WTC11 (cell line): ENCODE measurements at regions of chr10 and their contacts with region 1.

Region 1: DNA sequence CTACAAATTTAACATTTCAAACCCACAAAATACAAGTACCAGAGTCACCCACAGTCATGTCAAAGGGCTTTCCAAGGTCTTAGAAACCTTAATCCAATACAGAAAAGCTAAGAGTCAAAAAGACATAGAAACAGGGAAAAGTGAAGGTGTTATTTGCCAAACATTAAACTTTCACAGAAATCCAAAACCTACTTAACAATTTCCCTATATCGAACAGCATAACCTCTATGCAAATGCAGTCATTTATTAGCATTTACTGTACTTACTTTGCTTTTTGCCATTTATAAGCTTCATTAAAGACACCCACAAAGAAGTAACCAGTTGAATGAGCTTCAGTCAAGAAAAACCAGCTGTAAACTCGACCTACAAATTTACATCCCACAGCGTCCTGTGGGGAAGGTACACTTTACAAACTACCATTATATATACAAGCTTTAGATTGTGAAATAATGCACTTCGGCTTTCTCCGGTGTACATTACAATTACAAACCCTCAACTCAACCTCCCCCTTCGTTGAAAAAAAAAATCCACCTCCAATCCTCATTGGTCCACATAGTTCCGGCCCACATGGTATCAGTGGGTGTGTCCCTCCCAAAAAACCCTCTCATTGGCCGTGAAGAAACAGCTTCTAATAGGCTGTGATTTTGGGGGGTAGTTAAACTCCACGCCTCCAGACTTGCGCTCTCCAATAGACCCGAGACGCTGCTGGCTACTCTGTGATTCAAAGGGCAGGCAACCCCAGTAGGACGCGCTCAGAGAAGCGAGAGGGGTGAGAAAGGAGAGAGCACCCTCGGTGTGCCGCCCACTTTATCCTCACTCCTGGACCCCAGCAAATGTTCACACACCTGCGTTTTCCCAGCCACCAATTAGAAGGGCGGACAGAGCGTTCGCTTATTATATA is 1.4 kb downstream of the PANK1 start:
- DNase-seq: peak; percentile 80
- ATAC-seq: peak; percentile 88
- H3K4me3 Mint-ChIP-seq: no peak overlapping the region
- H3K27ac Mint-ChIP-seq: no peak overlapping the region; the same call in 1 of the 2 replicates
- H3K4me1 Mint-ChIP-seq: peaks cover 47% of the 10 kb centered on the region
- H3K27me3 Mint-ChIP-seq: no peaks in the 10 kb centered on the region
- CTCF ChIP-seq: no peak

Region 2: DNA sequence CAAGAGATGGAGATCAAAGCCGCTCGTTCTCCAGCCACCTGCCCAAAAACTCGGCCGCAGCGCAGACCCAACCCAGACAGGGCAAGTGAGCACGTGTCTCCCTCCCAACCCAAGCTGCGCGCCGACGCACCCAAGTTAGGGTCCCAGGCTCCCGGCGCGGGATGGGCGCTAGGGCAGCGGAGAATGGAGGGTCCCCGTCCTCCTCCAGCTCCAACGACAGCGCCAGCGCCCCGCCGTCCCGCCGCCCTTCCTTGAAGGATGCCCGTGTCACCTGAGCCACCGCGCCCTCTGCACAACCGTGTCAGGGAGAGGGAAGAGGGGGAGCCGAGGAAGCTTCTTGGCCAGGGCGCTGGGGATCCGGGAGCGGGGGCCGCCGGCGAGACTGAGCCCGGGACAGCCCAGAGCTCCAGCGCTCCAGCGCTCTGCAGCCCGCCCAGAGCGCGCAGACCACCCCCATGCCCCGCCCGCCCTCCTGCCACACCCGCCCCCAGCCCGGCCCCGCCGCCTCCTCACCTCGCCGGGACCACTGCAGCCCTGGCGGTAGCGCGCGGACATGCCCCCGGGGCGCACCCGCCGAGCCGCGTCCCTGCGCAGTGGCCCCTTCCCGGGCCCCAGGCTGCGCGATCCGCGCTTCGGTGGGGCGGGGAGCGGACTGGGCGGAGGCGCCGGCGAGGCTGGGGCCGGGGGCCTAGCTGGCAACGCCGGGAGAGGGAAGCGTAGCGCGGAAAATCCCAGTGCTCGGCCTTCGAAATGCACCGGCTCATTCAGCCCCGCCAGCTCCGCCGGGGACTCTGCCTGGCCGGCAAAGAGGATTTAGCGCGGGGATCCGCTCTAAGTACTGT is 108.3 kb before region 1 on chr10 and contains the start of gene SLC16A12:
- CTCF ChIA-PET with region 1: no interaction called
- POLR2A ChIA-PET with region 1: interaction called, 10 read pairs
- DNase-seq: peak; percentile 78
- ATAC-seq: peak; percentile 75
- H3K4me3 Mint-ChIP-seq: peak within 1 kb of the TSS; percentile 71
- H3K27ac Mint-ChIP-seq: peak within 1 kb of the TSS; percentile 99
- H3K4me1 Mint-ChIP-seq: peaks cover 52% of the 10 kb centered on the region
- H3K27me3 Mint-ChIP-seq: peaks cover 21% of the 10 kb centered on the region
- CTCF ChIP-seq: no peak
- total RNA-seq, gene SLC16A12: 8.0 to 10.9 TPM (median 8.3 TPM) in 3 replicates

Region 3: GRCh38 chr10:89633484-89633883 is 10.2 kb before region 1 on chr10:
- CTCF ChIA-PET with region 1: interaction called, 3 read pairs
- POLR2A ChIA-PET with region 1: interaction called, 10 read pairs
- DNase-seq: no peak
- ATAC-seq: no peak
- H3K4me3 Mint-ChIP-seq: no peak overlapping the region
- H3K27ac Mint-ChIP-seq: no peak overlapping the region
- H3K4me1 Mint-ChIP-seq: no peaks in the 10 kb centered on the region
- H3K27me3 Mint-ChIP-seq: no peaks in the 10 kb centered on the region
- CTCF ChIP-seq: no peak

Region 4: DNA sequence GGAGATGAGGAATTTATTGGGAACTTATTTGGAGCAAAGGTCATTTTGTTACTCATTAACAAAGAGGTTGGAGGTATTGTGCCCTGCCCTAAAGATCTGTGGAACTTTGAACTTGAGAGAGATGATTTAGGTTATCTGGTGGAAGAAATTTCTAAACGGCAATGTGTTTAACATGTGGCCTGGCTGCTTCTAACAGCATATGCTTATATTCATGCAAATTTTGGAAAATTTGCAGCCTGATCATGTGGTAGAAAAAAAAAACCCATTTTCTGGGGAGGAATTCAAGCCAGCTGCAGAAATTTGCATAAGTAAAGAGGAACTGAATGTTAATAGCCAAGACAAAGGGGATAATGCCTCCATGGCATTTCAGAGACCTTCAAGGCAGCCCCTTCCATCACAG is 12.0 kb after region 1 on chr10:
- CTCF ChIA-PET with region 1: no interaction called
- POLR2A ChIA-PET with region 1: no interaction called
- DNase-seq: no peak
- ATAC-seq: no peak
- H3K4me3 Mint-ChIP-seq: no peak overlapping the region
- H3K27ac Mint-ChIP-seq: no peak overlapping the region
- H3K4me1 Mint-ChIP-seq: peaks cover 14% of the 10 kb centered on the region
- H3K27me3 Mint-ChIP-seq: no peaks in the 10 kb centered on the region
- CTCF ChIP-seq: no peak

Region 5: DNA sequence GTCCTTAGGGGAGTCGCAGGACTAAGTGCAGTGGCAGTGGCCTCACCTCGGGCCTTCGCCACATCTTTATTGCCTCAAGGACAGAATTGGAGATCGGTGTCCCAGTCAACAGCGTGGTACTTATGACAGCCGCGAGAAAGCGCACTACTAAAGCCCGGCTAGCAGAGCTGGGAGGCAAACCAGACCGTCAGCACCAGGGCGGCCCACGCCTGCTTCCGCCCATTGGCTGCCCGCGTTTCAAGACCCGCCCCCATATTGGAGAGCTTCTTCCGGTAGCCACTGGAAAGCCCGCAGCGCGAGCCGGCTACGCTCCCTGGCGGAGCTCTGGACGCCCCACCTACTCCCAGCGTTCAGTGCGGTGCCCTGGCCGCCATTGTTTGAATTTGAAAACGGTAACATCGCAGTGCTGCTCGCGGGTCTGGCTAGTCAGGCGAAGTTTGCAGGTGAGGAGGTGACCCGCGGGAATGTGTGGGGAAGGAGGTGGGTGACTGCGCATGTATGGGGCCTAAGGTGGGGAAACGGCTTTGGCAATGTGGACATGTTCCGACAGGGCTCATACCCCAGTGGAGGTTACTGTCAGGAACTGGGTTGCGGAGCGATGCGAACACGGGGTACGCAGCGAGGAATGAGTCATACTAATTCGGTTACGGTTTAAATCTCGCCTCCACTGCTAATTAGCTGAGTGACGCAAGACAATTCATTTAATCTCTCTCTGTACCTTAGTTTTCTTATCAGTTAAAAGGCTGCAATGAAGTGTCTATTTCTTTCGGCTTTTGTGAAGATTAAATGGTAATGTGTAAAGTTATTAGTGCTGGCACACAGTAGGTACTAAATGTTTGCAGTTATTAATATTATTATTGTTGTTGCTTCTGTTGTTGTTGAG is 57.8 kb after region 1 on chr10 and contains the start of gene KIF20B:
- CTCF ChIA-PET with region 1: interaction called, 12 read pairs
- POLR2A ChIA-PET with region 1: interaction called, 22 read pairs
- DNase-seq: peak; percentile 97
- ATAC-seq: peak; percentile 98
- H3K4me3 Mint-ChIP-seq: peak within 1 kb of the TSS; percentile 97
- H3K27ac Mint-ChIP-seq: peak within 1 kb of the TSS; percentile 98
- H3K4me1 Mint-ChIP-seq: peaks cover 45% of the 10 kb centered on the region
- H3K27me3 Mint-ChIP-seq: no peaks in the 10 kb centered on the region
- CTCF ChIP-seq: no peak
- total RNA-seq, gene KIF20B: 56.9 to 70.2 TPM (median 57.3 TPM) in 3 replicates